Colonic mucosa (tissue), 4 donors: ENCODE measurements at regions of chr1 and their contacts with region 1.

Region 1: DNA sequence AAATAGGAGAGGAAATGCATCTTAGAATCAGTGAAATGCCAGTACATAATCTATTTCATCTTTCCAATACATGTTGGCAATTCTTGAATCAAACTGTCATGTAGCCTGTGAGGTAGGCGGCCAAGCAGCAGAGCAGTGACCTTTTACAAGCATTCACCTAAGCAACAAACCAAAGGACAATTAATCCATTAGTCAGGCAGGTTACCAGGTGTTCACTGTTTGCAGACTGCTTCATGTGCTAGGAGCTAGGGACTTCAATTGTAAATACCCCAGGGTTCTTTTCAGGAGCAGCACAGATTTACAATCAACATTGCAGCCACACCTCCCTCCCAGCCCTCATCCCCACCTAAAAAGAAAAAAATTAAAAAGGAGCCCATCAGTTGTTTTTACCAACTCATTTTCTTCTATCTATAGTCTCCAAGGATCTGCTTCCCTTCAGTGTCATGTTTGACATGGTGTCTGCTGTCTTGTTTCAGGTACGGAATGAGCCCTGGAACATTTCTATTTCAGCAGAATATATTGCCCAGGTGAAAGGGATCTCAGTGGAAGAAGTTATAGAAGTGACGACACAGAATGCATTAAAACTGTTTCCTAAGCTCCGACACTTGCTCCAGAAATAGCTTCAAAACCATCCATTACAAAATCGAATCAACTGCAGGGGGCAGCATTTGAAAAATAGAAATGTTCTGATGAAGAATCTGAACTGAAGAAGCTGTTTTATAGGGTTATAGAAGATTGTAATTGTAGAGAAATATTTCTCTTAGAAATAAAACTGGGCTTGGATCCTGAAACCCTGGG is 23.0 kb downstream of the TATDN3 start:
- DNase-seq: peak; percentile 56
- H3K4me3 ChIP-seq: no peak overlapping the region
- H3K27ac ChIP-seq: no peak overlapping the region
- H3K4me1 ChIP-seq: no peaks in the 10 kb centered on the region
- H3K27me3 ChIP-seq: no peaks in the 10 kb centered on the region
- CTCF ChIP-seq: peak; percentile 39

Region 2: DNA sequence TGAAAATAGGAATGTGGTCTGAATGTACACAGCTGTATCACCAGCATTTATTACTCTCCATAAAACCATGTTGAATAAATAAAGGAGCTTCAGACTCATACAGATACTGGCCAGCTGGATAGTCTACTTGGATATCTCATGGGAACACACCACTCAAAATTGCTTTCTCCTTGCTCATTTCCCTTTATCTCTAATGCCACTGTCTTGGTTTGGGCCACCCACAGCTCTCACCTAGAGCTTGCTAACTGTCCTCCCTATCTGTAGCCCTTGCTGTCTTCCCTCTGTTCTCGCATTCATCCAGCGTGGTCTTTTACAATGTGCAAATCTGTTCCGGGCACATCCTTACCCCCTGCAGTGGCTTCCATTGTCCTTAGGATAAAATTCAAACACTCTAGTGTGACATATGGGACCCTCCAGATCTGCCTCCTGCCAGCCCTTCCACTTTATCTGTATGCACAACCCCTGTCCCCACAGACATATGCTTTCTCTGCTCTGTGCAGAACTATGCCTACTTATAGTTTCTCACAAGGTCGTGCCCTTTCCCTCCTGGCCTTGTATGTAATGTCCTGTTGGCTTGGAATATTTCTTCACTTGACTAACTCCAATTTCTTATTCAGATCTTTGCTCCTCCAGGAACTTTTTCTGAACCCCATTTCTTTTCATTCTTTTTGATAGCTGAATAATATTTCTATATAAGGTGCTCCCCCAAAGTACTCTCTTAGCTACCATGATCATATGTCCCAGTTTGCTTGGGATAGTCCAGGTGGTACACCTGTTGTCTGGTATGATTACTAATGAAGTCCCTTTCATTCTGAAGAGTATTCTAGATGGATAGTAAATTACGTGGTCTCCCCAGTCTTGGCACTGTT is 46.2 kb after region 1 on chr1:
- intact Hi-C with region 1: loop called (anchors 10 kb)
- DNase-seq: no peak
- H3K4me3 ChIP-seq: no peak overlapping the region
- H3K27ac ChIP-seq: no peak overlapping the region
- H3K4me1 ChIP-seq: peaks cover 24% of the 10 kb centered on the region
- H3K27me3 ChIP-seq: no peaks in the 10 kb centered on the region
- CTCF ChIP-seq: no peak

Region 3: GRCh38 chr1:212990276-212990675 is 175.5 kb after region 1 on chr1:
- intact Hi-C with region 1: loop called (anchors 5 kb)
- DNase-seq: no peak
- H3K4me3 ChIP-seq: no peak overlapping the region
- H3K27ac ChIP-seq: no peak overlapping the region
- H3K4me1 ChIP-seq: no peaks in the 10 kb centered on the region
- H3K27me3 ChIP-seq: no peaks in the 10 kb centered on the region
- CTCF ChIP-seq: no peak